ENCODE measurements at regions of chr2 and their contacts with region 1.

Region 1: DNA sequence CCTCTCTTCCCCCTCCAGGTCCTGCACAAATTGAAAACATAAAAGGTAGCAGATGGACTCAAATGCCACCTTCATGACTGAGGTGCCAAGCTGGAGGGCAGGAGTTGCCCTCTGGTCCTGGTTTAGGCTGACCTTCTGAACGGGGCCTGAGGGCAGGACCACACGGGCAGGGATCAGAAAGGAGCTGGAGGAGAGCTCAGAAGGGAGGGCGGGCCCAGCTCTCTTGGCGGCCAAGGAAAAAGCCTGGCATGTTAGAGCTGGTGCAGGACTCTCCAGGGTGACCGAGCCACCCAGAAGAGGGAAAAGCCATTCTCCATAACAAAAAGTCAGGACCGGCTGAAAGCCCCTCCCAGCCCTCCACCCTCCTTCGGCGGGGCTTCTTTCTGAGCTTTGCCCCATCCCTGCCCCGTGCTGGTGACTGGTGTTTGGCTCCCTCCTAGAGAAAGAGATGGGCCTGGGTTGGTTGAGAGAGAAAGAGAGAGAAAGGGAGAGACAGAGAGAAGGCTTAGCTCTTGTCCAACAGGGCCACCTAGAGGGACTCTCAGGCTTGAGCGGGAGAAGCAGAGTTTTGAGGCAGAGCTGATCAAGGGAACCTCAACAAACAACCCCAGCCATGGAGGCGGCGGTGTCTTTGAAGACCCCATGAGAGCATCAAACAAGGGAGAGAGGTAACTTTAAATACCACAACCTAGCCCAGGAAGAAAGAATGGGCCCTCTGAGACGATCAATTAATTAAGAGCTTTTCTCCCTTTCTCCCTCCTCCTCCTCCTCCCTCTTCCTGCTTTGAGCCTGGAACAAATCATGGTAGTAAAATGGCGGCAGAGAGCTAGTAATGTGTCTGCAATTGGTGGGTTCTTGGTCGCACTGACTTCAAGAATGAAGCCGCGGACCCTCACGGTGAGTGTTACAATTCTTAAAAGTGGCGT is 50.8 kb downstream of the WIPF1 start:
- DNase-seq: peak in 5 of 9 experiments; percentile 8 to 66 (median 46)
- ATAC-seq: peak; percentile 83
- H3K4me3 ChIP-seq: no peak overlapping the region
- H3K4me3 Mint-ChIP-seq: no peak overlapping the region
- H3K27ac ChIP-seq: no peak overlapping the region
- H3K27ac Mint-ChIP-seq: peak overlapping the region; percentile 73
- H3K4me1 ChIP-seq: peaks cover 4% of the 10 kb centered on the region
- H3K4me1 Mint-ChIP-seq: peaks cover 23% of the 10 kb centered on the region
- H3K27me3 ChIP-seq: no peaks in the 10 kb centered on the region
- H3K27me3 Mint-ChIP-seq: no peaks in the 10 kb centered on the region
- CTCF ChIP-seq: no peak

Region 2: DNA sequence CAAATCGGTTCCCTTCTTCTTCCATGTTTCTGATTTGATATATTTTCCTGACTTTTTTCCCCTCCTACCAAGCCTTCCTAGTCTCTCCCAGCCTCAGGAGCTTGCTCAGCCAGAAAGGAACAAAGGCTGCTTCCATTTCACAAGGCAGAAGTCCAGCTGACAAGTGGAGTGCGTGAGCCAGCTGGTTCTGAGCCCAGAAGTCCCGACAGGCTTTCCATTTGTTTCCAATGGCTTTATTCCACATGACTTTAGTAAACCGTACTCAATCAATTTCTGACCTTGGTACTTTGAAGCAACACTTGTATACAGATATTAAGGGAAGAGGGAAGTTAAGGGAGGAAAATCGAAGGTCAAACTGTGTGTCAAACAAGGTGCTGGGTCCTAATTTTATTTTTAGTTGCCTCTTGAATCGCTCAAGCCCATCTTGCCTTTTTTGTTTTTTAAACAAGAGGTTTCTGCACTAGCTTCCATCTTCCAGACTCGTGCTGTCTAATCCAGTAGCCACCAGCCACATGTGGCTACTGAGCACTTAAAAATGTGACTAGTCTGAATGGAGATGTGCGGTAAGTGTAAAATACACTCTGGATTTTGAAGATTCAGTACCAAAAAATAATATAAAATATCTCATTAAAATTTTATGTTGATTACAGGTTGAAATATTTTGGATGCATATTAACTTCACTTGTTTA is 14.6 kb after region 1 on chr2:
- CTCF ChIA-PET with region 1: interaction called, 14 read pairs
- POLR2A ChIA-PET with region 1: interaction called, 7 read pairs
- intact Hi-C with region 1: no loop called
- DNase-seq: no peak
- ATAC-seq: no peak
- H3K4me3 ChIP-seq: no peak overlapping the region
- H3K4me3 Mint-ChIP-seq: no peak overlapping the region
- H3K27ac ChIP-seq: peak overlapping the region in 1 of 2 experiments; percentile 34
- H3K27ac Mint-ChIP-seq: peak overlapping the region; percentile 81
- H3K4me1 ChIP-seq: no peaks in the 10 kb centered on the region
- H3K4me1 Mint-ChIP-seq: peaks cover 7% of the 10 kb centered on the region
- H3K27me3 ChIP-seq: no peaks in the 10 kb centered on the region
- H3K27me3 Mint-ChIP-seq: no peaks in the 10 kb centered on the region
- CTCF ChIP-seq: no peak